ENCODE measurements at regions of chr14 and their contacts with region 1.

Region 1: DNA sequence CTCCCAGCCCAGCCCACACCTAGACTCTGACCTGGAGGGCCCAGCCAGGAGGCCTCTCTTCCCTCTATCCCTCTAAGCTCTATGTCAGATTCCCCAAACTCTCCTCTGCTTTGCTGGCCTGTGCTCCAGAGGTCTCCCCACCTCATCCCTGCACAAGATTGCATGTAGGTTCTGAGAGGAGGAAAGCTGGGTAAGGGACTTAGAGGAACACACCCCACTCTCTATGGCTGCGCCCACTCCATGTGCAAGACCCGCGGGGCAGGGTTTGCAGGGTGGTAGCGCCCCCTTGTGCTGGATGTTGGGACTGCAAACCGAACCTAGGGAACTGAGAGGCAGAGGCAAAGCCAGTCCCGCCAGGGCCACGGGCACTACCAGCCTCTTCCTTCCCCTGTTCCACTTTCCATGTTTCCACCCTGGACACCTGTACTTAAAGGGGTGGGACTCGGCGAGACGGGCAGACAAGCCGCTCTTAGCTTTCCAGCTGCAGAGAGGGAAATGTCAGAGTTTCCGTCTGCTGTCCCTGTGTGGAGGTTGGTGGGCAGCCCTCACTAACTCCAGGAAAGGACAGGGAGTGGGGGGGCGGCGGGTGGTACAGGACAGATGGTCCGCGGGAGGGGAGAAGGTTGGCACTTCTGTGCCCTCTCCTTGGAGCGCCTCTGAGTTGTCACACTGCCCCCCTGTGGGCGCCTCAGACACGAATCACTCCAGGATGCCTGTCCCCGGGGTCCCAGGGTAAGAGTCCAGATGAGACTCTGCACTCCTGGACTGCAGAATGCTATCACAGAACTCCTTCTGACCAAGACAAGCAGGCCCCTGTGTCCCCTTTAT is 16.8 kb downstream of the MMP14 start:
- DNase-seq: peak; percentile 95
- H3K4me3 Mint-ChIP-seq: peak overlapping the region; percentile 72
- H3K27ac Mint-ChIP-seq: peak overlapping the region; percentile 84
- H3K4me1 Mint-ChIP-seq: peaks cover 24% of the 10 kb centered on the region
- H3K27me3 Mint-ChIP-seq: no peaks in the 10 kb centered on the region

Region 2: DNA sequence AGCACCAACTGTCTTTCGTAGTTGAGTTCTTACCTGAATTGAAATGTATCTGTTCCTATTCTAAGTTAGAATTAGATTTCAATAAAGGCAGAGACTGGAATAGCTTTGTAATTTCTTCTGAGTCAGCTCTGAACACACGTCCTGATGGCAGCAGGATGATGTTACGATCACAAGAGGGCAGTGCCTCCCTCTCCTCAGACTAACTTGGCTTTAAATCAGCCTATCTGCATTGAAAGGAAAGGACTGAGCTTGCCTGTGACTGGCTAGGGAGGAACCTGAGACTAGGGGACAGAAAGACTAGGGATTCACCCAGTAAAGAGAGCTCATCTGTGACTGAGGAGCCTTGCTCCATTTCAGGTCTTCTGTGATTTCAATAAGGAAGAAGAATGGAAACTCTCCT is 855.9 kb before region 1 on chr14:
- CTCF ChIA-PET with region 1: interaction called, 3 read pairs
- intact Hi-C with region 1: loop called (anchors 10 kb)
- DNase-seq: peak; percentile 65
- H3K4me3 Mint-ChIP-seq: peak overlapping the region; percentile 92
- H3K27ac Mint-ChIP-seq: peak overlapping the region; percentile 96
- H3K4me1 Mint-ChIP-seq: peaks cover 32% of the 10 kb centered on the region
- H3K27me3 Mint-ChIP-seq: no peaks in the 10 kb centered on the region

Region 3: GRCh38 chr14:22598099-22598899 is 254.9 kb before region 1 on chr14 and contains the start of gene ABHD4:
- CTCF ChIA-PET with region 1: interaction called, 10 read pairs
- intact Hi-C with region 1: no loop called
- DNase-seq: peak; percentile 75
- H3K4me3 Mint-ChIP-seq: peak within 1 kb of the TSS; percentile 90
- H3K27ac Mint-ChIP-seq: peak within 1 kb of the TSS; percentile 72
- H3K4me1 Mint-ChIP-seq: peaks cover 28% of the 10 kb centered on the region
- H3K27me3 Mint-ChIP-seq: no peaks in the 10 kb centered on the region
- total RNA-seq, gene ABHD4: 11.1 to 11.9 TPM

Region 4: DNA sequence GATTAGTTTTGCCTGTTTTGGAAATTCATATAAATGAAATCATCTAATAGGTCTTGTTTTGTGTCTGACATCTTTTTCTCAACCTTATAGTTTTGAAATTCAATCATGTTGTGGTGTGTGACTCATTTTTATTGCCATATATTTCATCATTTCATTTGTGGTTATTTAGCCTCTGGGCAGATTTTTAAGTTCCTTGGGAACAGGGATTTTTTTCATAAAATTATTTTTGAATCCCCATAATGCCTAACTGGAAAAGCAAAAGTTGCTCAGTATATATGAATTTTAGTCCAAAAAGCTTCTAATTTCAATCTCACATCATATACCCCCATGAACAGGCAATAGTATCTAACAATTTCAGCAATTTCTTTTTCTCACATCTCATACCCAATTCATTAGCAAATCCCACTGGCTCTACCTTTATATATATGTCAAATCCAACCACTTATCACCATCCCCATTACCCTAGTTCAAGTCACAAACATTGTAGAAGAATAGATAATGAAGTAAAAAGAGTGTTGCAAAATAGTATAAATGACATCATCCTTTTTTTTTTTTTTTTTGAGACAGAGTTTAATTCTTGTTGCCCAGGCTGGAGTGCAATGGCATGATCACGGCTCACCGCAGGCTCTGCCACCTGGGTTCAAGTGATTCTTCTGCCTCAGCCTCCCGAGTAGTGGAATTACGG is 206.4 kb before region 1 on chr14:
- CTCF ChIA-PET with region 1: no interaction called
- intact Hi-C with region 1: no loop called
- DNase-seq: no peak
- H3K4me3 Mint-ChIP-seq: no peak overlapping the region
- H3K27ac Mint-ChIP-seq: peak overlapping the region; percentile 39
- H3K4me1 Mint-ChIP-seq: peaks cover 7% of the 10 kb centered on the region
- H3K27me3 Mint-ChIP-seq: no peaks in the 10 kb centered on the region

Region 5: DNA sequence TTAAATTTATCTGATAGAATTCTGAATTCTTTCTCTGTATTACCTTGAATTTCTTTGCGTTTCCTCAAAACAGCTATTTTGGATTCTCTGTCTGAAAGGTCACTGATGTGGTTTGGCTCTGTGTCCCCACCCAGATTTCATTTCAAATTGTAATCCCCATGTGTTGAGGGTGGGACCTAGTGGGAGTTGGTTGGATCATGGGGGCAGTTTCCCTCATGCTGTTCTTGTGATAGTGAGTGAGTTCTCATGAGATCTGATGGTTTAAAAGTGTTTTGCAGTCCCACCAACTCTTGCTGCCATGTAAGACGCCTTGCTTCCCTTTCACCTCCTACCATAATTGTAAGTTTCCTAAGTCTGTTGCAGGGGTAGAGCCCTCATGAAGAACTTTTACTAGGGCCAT is 174.9 kb before region 1 on chr14:
- CTCF ChIA-PET with region 1: no interaction called
- intact Hi-C with region 1: no loop called
- DNase-seq: no peak
- H3K4me3 Mint-ChIP-seq: no peak overlapping the region
- H3K27ac Mint-ChIP-seq: no peak overlapping the region
- H3K4me1 Mint-ChIP-seq: no peaks in the 10 kb centered on the region
- H3K27me3 Mint-ChIP-seq: peaks cover 25% of the 10 kb centered on the region

Region 6: DNA sequence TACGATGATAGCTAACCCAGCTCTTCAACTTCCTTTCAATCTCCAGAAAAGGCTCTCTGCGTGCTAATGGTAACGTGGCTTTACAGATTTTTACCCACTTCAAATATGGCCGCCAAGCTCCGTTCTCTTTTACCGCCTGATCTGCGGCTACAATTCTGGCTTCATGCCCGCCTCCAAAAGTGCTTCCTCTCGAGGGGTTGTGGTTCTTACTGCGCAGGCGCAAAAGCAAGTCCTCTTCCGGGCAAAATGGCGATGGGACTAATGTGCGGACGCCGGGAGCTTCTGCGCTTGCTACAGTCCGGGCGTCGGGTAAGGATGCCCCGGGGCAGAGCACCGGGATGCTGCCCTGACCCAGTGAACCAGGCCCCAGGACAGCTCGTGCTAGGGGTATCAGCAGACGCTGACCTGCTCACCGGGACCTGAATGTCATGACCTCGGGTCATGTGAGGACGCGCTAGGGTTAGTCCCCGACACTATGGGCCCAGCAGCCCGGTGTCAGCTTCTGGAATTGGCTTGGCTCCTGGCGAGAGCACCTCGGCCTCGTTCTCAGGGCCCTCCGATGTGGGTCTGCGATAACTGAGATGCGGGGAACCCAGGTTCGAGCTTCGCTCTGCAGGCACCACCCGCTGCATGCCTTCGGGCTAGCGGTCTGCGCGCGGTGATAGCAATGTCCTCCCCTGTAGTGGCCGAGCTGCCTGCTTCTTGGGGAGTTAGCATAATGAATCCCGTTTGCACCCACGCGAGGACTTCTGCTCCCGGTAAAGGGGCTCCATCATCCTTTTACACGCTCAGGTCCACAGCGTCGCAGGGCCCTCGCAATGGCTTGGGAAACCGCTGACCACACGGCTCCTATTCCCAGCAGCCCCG is 86.5 kb before region 1 on chr14 and contains the start of gene OXA1L:
- CTCF ChIA-PET with region 1: interaction called, 8 read pairs
- intact Hi-C with region 1: loop called (anchors 1 kb)
- DNase-seq: peak; percentile 99
- H3K4me3 Mint-ChIP-seq: peak within 1 kb of the TSS; percentile 83
- H3K27ac Mint-ChIP-seq: peak within 1 kb of the TSS; percentile 95
- H3K4me1 Mint-ChIP-seq: peaks cover 31% of the 10 kb centered on the region
- H3K27me3 Mint-ChIP-seq: no peaks in the 10 kb centered on the region
- total RNA-seq, gene OXA1L: 149 to 152 TPM

Region 7: DNA sequence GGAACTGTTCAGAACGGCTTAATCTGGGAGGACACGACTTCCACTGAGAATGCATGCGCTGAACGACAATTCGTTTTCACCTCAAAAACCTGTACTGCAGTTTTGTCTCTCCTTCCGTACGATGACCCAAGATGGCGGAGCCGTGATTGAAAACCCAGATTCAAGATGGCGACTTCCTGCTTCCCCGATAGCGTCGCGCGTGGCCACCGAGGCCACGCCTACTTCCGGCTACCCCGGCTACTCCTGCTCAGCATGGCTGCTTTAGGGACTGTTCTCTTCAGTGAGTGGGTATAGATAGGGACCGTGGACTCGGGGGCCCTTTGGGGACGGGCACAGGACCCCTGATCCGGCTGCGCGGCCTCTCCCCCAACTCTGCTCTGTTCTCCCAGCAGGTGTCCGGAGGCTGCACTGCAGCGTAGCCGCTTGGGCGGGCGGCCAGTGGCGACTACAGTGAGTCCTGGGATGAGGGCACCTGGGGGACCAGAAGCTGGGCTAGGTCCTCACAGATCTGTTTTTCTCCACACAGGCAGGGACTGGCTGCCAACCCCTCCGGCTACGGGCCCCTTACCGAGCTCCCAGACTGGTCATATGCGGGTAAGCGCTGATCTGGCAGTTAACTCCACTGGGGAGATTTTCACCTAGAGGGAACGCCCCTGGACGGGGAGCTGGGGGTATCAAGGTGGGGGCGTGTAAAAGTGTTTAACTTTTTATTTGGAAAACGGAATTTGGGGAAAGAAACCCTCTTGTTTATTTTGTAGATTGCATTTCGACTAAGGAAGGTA is 23.3 kb before region 1 on chr14 and contains the start of gene MRPL52:
- CTCF ChIA-PET with region 1: interaction called, 212 read pairs
- intact Hi-C with region 1: no loop called
- DNase-seq: peak; percentile 94
- H3K4me3 Mint-ChIP-seq: peak within 1 kb of the TSS; percentile 94
- H3K27ac Mint-ChIP-seq: peak within 1 kb of the TSS; percentile 97
- H3K4me1 Mint-ChIP-seq: peaks cover 34% of the 10 kb centered on the region
- H3K27me3 Mint-ChIP-seq: no peaks in the 10 kb centered on the region
- total RNA-seq, gene MRPL52: 170 TPM

Region 8: DNA sequence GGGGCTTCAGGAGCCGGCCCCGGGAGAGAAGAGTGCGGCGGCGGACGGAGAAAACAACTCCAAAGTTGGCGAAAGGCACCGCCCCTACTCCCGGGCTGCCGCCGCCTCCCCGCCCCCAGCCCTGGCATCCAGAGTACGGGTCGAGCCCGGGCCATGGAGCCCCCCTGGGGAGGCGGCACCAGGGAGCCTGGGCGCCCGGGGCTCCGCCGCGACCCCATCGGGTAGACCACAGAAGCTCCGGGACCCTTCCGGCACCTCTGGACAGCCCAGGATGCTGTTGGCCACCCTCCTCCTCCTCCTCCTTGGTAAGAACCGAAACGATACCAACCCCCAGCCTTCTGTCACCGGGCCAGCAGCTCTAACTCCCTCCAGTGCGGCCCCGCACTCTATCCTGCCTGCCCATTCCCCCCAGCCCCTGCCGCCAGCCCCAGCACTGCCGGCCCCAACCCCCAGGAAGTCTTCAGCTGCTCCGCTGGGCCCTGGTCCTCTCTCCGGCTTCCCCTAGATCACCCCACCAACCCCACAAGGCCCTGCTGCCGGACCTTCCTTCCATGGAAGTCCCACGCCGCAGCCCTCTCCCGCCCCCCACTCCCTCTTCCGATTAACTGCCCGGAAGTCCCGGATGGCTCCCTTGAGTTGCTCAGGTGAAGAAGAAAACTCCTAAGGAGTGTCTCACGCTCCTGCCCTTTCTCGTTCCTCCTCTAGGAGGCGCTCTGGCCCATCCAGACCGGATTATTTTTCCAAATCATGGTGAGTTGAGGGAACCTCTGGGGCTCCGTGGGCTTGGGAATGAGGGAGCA is 19.1 kb after region 1 on chr14:
- CTCF ChIA-PET with region 1: interaction called, 47 read pairs
- intact Hi-C with region 1: loop called (anchors 1 kb)
- DNase-seq: peak; percentile 87
- H3K4me3 Mint-ChIP-seq: peak overlapping the region; percentile 91
- H3K27ac Mint-ChIP-seq: peak overlapping the region; percentile 100
- H3K4me1 Mint-ChIP-seq: peaks cover 29% of the 10 kb centered on the region
- H3K27me3 Mint-ChIP-seq: no peaks in the 10 kb centered on the region

Measured in activated naive CD4-positive, alpha-beta T cell treated with anti-CD3 and anti-CD28 coated beads for 36 hours (primary cell).